ENCODE measurements at regions of chr14 and their contacts with region 1.

Region 1: GRCh38 chr14:52299692-52300278 is 14.3 kb upstream of the PTGER2 start:
- DNase-seq: peak; percentile 71
- ATAC-seq: peak; percentile 82
- H3K4me3 ChIP-seq: no peak overlapping the region
- H3K27ac ChIP-seq: no peak overlapping the region
- H3K4me1 ChIP-seq: no peaks in the 10 kb centered on the region
- H3K27me3 ChIP-seq: no peaks in the 10 kb centered on the region
- CTCF ChIP-seq: peak; percentile 81
- POLR2A ChIP-seq: no peak
- RAD21 ChIP-seq: peak; percentile 85

Region 2: DNA sequence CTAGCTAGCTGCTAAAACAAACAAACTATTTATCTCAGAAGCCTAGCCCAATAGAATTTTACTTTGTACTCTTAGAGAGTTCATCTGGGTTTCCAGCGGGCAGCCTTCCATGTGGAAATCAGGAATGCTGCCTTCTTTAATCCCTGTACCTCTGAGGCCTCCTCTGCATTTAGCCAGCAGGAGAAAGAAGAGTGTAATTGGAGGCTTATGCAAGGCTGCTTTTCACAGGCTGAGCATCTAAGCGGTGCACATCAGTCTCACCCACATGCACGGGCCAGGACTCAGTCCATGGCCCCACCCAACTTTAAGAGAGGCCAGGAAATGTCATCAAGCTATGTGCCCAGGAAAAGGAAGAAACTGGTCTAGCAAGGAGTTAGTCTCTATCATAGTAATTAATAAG is 46.3 kb before region 1 on chr14:
- CTCF ChIA-PET with region 1: no interaction called
- POLR2A ChIA-PET with region 1: interaction called, 11 read pairs
- dilution Hi-C with region 1: no loop called
- in situ Hi-C with region 1: no loop called
- intact Hi-C with region 1: no loop called
- DNase-seq: peak; percentile 5
- ATAC-seq: peak; percentile 77
- H3K4me3 ChIP-seq: no peak overlapping the region
- H3K27ac ChIP-seq: no peak overlapping the region
- H3K4me1 ChIP-seq: no peaks in the 10 kb centered on the region; the same call in 1 of the 2 replicates
- H3K27me3 ChIP-seq: peaks cover 9% of the 10 kb centered on the region; the same call in 1 of the 2 replicates
- CTCF ChIP-seq: no peak
- POLR2A ChIP-seq: no peak
- RAD21 ChIP-seq: no peak

Region 3: DNA sequence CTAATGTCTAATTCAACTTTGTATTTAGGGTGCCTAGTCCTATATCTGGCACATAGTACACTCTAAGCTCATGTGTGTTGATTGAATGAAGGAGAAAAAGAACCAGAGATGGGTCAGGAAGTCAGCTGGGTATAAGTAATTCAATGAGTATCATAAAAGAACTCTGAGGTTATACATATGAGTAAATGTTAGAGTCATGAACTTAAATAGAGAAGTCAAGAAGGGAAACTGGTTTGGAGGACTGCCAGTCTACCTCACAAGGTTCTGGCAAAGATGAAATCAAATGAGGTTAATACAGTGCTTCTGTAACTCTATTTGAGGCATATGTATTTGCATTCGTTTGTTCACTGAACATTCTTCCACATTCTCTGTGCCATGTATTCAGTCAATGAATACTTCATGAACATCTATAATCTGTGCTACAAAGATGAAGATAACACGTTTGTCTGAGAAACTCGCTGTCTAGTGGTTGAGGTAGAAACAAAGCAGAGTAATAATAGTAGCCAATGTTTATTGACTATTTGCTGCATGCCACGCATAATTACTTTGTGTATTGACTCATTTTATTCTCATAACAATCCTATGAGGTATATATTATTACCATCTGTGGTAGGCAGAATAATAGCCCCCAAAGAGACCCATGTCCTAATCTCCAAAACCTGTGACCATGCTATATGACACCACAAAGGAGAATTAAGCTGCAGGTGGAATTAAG is 103.2 kb after region 1 on chr14:
- CTCF ChIA-PET with region 1: interaction called, 12 read pairs
- POLR2A ChIA-PET with region 1: no interaction called
- dilution Hi-C with region 1: no loop called
- in situ Hi-C with region 1: no loop called
- intact Hi-C with region 1: no loop called
- DNase-seq: peak; percentile 72
- ATAC-seq: no peak
- H3K4me3 ChIP-seq: no peak overlapping the region
- H3K27ac ChIP-seq: no peak overlapping the region
- H3K4me1 ChIP-seq: peaks cover 22% of the 10 kb centered on the region
- H3K27me3 ChIP-seq: no peaks in the 10 kb centered on the region
- CTCF ChIP-seq: no peak
- POLR2A ChIP-seq: no peak
- RAD21 ChIP-seq: no peak

Region 4: DNA sequence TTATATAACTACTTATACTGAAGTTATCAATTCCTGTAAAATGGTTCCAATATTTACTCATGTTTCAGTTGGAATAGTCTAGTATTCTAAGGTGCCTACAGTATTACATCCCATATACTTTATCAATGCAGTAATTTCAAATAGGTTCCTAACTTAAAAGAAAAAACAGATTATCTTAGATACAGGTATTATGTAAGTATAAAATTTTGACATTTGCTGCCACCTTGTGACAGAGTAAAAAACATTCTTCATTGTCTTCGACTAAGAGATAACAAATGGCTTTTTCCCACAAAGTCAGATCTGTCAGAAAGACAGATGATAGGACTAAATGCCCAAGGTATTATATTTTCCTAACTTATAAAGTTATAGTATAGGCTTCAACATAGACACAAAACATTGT is 173.8 kb after region 1 on chr14:
- CTCF ChIA-PET with region 1: no interaction called
- POLR2A ChIA-PET with region 1: no interaction called
- dilution Hi-C with region 1: no loop called
- in situ Hi-C with region 1: loop called (anchors 5 kb)
- intact Hi-C with region 1: loop called (anchors 1 kb)
- DNase-seq: peak; percentile 51
- ATAC-seq: peak; percentile 29; the same call in 1 of the 2 replicates
- H3K4me3 ChIP-seq: no peak overlapping the region
- H3K27ac ChIP-seq: no peak overlapping the region
- H3K4me1 ChIP-seq: no peaks in the 10 kb centered on the region
- H3K27me3 ChIP-seq: no peaks in the 10 kb centered on the region
- CTCF ChIP-seq: peak; percentile 47
- POLR2A ChIP-seq: no peak
- RAD21 ChIP-seq: peak; percentile 56

Region 5: GRCh38 chr14:52695481-52696091 is 395.8 kb after region 1 on chr14 and contains the start of gene ERO1A:
- CTCF ChIA-PET with region 1: no interaction called
- POLR2A ChIA-PET with region 1: no interaction called
- dilution Hi-C with region 1: no loop called
- in situ Hi-C with region 1: loop called (anchors 25 kb)
- intact Hi-C with region 1: loop called (anchors 5 kb)
- DNase-seq: peak; percentile 83
- ATAC-seq: peak; percentile 91
- H3K4me3 ChIP-seq: peak within 1 kb of the TSS; percentile 74
- H3K27ac ChIP-seq: peak within 1 kb of the TSS; percentile 96
- H3K4me1 ChIP-seq: peaks cover 2% of the 10 kb centered on the region
- H3K27me3 ChIP-seq: no peaks in the 10 kb centered on the region
- CTCF ChIP-seq: peak; percentile 21; the same call in 1 of the 2 replicates
- POLR2A ChIP-seq: peak; percentile 78
- RAD21 ChIP-seq: no peak
- total RNA-seq, gene ERO1A: 38.0 and 44.6 TPM in 2 replicates

Measured in IMR-90 (cell line).